ENCODE measurements at regions of chrX and their contacts with region 1.

Region 1: GRCh38 chrX:10189317-10190268 is 32.8 kb downstream of the CLCN4 start:
- DNase-seq: peak; percentile 31 to 75 (median 56)
- H3K4me3 ChIP-seq: no peak overlapping the region
- H3K4me3 Mint-ChIP-seq: no peak overlapping the region
- H3K27ac ChIP-seq: no peak overlapping the region
- H3K27ac Mint-ChIP-seq: peak overlapping the region in 1 of 8 donors; percentile 59
- H3K4me1 ChIP-seq: no peaks in the 10 kb centered on the region
- H3K4me1 Mint-ChIP-seq: peaks cover 0 to 4% (median 0%) of the 10 kb centered on the region in 3 donors
- H3K27me3 ChIP-seq: no peaks in the 10 kb centered on the region
- H3K27me3 Mint-ChIP-seq: peaks cover 5 to 19% of the 10 kb centered on the region in 2 donors

Region 2: DNA sequence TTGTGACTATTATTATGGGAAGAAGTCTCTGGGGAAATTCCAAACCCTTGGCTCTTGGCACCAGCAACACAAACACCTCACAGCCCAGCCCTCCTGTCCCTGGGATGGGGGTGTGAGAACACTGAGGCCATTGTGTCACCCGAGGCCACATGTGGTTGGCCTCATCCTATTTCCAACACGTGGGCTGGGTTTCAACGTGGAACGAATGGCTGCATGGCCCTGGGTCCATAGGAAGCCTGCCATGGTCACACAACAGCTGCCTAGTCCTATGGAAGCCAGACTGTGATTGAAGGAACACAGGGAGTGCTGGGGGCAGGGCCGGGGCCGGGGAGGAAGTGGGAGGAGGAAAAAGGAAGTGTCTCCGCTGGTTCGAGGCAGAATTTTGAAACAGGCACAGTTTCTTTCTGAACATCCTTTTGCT is 22.9 kb before region 1 on chrX:
- CTCF ChIA-PET with region 1: no interaction called
- POLR2A ChIA-PET with region 1: no interaction called
- DNase-seq: no peak
- H3K4me3 ChIP-seq: no peak overlapping the region
- H3K4me3 Mint-ChIP-seq: no peak overlapping the region
- H3K27ac ChIP-seq: no peak overlapping the region
- H3K27ac Mint-ChIP-seq: no peak overlapping the region
- H3K4me1 ChIP-seq: no peaks in the 10 kb centered on the region
- H3K4me1 Mint-ChIP-seq: peaks cover 0 to 11% (median 6%) of the 10 kb centered on the region in 3 donors
- H3K27me3 ChIP-seq: no peaks in the 10 kb centered on the region
- H3K27me3 Mint-ChIP-seq: peaks cover 16 to 17% of the 10 kb centered on the region in 2 donors

Region 3: DNA sequence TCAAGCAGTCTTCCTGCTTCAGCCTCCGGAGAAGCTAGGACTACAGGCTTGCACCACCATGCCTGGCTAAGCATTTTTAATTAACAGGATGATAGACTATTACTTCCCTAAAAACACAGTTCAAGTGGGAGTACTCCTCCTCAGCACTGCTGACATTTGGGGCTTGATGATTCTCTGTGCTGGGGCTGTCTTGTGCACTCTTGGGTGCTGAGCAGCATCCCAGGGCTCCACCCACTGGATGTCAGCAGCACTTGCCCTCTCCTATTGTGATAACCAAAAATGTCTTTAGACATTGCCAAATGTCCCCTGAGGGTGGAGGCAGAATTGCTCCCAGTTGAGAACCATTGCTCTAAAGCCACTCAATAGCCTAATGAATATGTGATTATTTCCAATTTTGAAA is 27.6 kb after region 1 on chrX:
- CTCF ChIA-PET with region 1: no interaction called
- POLR2A ChIA-PET with region 1: no interaction called
- DNase-seq: no peak
- H3K4me3 ChIP-seq: no peak overlapping the region
- H3K4me3 Mint-ChIP-seq: no peak overlapping the region
- H3K27ac ChIP-seq: no peak overlapping the region
- H3K27ac Mint-ChIP-seq: no peak overlapping the region
- H3K4me1 ChIP-seq: no peaks in the 10 kb centered on the region
- H3K4me1 Mint-ChIP-seq: no peaks in the 10 kb centered on the region
- H3K27me3 ChIP-seq: no peaks in the 10 kb centered on the region
- H3K27me3 Mint-ChIP-seq: peaks cover 0 to 10% of the 10 kb centered on the region in 2 donors

Region 4: DNA sequence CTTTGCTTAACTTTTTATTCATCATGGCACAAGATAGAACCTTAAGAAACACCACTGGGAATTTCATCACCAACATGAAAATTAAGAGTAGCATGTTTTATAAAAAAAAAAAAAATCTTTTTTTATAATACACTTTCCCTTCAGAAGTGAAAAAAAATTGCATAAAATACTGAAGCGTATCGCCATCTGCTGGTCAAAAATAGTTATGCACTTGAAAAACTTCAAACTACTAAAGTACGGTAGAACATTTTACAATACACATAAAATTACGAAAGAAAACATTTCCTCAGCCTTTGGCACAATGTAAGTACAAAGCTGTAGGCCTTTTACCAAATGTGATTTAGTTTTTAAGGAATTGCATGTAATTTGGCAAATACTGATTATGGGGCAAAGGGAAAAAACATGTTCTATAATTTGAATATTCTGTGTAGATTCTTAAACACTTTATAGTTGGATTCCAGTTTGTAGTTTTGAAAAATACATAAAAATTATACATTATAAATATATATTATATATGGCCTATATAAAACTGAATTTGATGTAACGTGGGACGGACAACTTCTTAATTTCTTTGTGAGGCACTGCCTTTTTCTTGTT is 948.0 kb after region 1 on chrX:
- CTCF ChIA-PET with region 1: interaction called, 28 read pairs
- POLR2A ChIA-PET with region 1: no interaction called
- DNase-seq: peak in 2 of 5 donors; percentile 11 to 34
- H3K4me3 ChIP-seq: no peak overlapping the region
- H3K4me3 Mint-ChIP-seq: no peak overlapping the region
- H3K27ac ChIP-seq: no peak overlapping the region
- H3K27ac Mint-ChIP-seq: no peak overlapping the region
- H3K4me1 ChIP-seq: no peaks in the 10 kb centered on the region
- H3K4me1 Mint-ChIP-seq: peaks cover 0 to 1% (median 0%) of the 10 kb centered on the region in 3 donors
- H3K27me3 ChIP-seq: no peaks in the 10 kb centered on the region
- H3K27me3 Mint-ChIP-seq: peaks cover 3 to 10% of the 10 kb centered on the region in 2 donors

Measured in CD8-positive, alpha-beta memory T cell (primary cell).